ENCODE measurements at regions of chr6 and their contacts with region 1.

Region 1: GRCh38 chr6:28683944-28684538 is 158.4 kb downstream of the GPX5 start:
- DNase-seq: peak; percentile 73
- H3K4me3 ChIP-seq: no peak overlapping the region
- H3K27ac ChIP-seq: no peak overlapping the region
- H3K4me1 ChIP-seq: no peaks in the 10 kb centered on the region
- H3K27me3 ChIP-seq: peaks cover 35% of the 10 kb centered on the region

Region 2: GRCh38 chr6:28399350-28400121 is 284.5 kb before region 1 on chr6 and contains the start of gene ZSCAN12:
- in situ Hi-C with region 1: no loop called
- DNase-seq: peak; percentile 92
- H3K4me3 ChIP-seq: peak within 1 kb of the TSS; percentile 93
- H3K27ac ChIP-seq: peak within 1 kb of the TSS; percentile 22
- H3K4me1 ChIP-seq: 0 out of 2 replicates have a peak, but pooled peaks cover 3% of the 10 kb centered on the region
- H3K27me3 ChIP-seq: no peaks in the 10 kb centered on the region
- total RNA-seq, gene ZSCAN12: 1.9 and 3.1 TPM in 2 replicates

Region 3: GRCh38 chr6:29016559-29017427 is 332.8 kb after region 1 on chr6:
- in situ Hi-C with region 1: loop called (anchors 10 kb)
- DNase-seq: peak; percentile 85
- H3K4me3 ChIP-seq: peak overlapping the region; percentile 94
- H3K27ac ChIP-seq: no peak overlapping the region
- H3K4me1 ChIP-seq: no peaks in the 10 kb centered on the region
- H3K27me3 ChIP-seq: 0 out of 2 replicates have a peak, but pooled peaks cover 3% of the 10 kb centered on the region

Region 4: DNA sequence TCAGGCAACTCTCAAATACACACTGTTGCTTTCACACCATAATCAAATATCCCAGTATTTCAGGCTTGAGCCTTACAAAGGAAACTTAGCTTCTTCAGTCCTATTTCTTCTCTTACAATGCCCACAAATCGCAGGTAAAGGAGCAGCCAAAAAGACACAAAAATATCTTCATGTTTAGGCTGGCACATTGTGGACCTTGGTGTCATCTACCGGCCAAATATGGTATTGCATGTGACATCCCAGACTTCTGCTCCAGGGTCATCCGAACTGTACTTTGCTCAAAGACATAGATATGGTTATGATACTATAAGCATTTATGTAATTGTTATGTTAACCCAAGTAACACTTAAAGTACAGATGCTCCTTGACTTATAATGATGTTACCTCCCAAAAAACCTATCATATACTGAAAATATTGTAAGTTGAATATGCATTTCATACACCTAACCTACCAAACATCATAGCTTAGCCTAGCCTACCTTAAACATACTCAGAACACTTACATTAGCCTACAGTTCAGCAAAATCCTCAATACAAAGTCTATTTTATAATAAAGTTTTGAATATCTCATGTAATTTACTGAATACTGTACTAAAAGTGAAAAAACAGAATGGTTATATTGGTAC is 905.5 kb after region 1 on chr6:
- in situ Hi-C with region 1: loop called (anchors 25 kb)
- DNase-seq: peak; percentile 58
- H3K4me3 ChIP-seq: no peak overlapping the region
- H3K27ac ChIP-seq: no peak overlapping the region
- H3K4me1 ChIP-seq: no peaks in the 10 kb centered on the region
- H3K27me3 ChIP-seq: peaks cover 5% of the 10 kb centered on the region; the same call in 1 of the 2 replicates

Measured in GM23248 (cell line).